ENCODE measurements at regions of chr17 and their contacts with region 1.

Region 1: GRCh38 chr17:64063766-64064224 is 43.4 kb upstream of the ICAM2 start:
- DNase-seq: peak; percentile 70 to 84 (median 82)
- H3K4me3 ChIP-seq: peak overlapping the region in 2 of 7 experiments; percentile 15 to 43
- H3K27ac ChIP-seq: no peak overlapping the region
- H3K4me1 ChIP-seq: peaks cover 0 to 24% (median 12%) of the 10 kb centered on the region in 4 experiments
- H3K27me3 ChIP-seq: no peaks in the 10 kb centered on the region

Region 2: DNA sequence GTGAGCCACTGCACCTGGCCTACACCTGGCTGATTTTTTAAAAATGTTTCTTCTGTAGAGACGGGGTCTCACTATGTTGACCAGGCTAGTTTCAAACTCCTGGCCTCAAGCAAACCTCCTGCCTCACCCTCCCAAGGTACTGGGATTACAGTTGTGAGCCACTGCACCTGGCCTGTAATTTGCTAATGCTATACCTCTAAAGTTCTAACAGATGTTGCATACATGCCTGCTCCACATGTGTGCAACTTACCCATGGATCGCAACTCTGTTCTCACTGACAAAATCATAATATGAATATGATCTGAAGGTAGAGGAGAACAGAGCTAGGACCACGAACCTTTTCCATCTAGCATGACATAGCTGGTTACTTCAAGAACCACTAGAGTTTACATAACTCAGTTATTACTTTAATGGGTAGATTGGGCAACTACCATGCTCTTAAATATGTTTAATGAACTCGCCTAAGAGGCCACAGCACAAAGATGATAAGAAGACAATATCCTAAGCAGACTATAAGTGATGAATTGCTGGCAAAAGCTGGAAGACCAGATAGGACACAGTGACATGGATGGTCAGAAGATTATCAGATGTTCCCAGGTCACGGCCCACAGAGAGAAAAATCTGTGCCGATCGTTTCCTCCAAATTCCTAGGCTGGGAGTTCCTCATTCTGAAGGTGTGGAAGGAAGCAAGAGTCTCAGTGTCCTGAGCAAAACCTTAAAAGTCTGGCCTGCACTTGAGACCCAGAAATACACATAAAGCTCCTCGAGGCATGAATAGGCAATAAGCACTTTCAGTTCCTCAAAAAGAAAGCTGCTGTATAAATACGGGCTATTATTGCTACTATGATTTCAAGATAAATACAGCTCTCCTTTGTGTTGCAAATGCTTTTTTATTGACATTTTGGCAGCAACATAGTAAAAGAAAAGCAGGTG is 10.2 kb after region 1 on chr17:
- CTCF ChIA-PET with region 1: interaction called, 42 read pairs
- POLR2A ChIA-PET with region 1: no interaction called
- DNase-seq: peak; percentile 34 to 88 (median 79)
- H3K4me3 ChIP-seq: peak overlapping the region in 4 of 7 experiments; percentile 20 to 57 (median 47)
- H3K27ac ChIP-seq: peak overlapping the region; percentile 33 to 60
- H3K4me1 ChIP-seq: peaks cover 23 to 36% (median 33%) of the 10 kb centered on the region in 4 experiments
- H3K27me3 ChIP-seq: no peaks in the 10 kb centered on the region

Region 3: DNA sequence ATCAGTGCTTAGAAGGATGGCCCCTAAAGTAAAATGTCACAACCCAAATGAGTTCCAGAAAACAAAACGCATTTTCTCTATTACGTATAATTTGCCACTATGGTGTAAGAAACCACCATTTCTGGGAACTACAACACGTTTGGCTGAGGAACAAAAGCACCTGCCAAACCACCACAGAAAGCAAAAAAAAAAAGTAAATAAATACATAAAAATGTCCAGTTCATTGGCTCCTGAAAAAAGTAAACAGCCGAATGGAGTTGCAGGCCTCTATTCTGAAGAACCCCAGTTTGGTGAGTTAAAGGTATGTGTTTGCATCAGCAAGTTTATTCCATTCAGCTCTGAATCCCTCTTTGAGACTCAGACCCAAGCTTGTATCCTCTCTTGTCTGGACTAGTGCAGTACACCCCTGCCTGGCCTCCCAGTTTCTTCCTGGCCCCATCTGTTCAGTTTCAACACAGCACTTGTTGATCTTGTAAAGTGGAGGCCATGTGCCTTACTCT is 29.2 kb after region 1 on chr17:
- CTCF ChIA-PET with region 1: interaction called, 12 read pairs
- POLR2A ChIA-PET with region 1: no interaction called
- DNase-seq: no peak
- H3K4me3 ChIP-seq: no peak overlapping the region
- H3K27ac ChIP-seq: no peak overlapping the region
- H3K4me1 ChIP-seq: peaks cover under 1 to 8% (median 6%) of the 10 kb centered on the region in 4 experiments
- H3K27me3 ChIP-seq: no peaks in the 10 kb centered on the region

Region 4: DNA sequence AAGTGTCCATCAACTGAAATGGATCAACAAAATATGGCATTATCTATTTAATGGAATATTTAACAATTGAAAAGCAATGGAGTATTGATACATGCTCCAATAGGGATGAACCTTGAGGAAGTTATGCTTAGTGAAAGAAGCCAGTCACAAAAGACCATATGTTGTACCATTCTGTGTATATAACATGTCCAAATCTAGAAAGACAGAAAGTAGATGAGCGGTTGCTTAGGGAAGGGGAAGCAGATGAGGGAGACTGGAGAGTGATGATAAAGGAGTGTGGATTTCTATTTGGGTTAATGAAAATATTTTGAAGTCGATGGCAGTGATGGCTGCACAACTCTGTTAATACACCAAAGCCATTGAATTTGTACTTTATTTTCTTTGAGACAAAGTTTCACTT is 74.6 kb after region 1 on chr17:
- CTCF ChIA-PET with region 1: interaction called, 212 read pairs
- POLR2A ChIA-PET with region 1: interaction called, 3 read pairs
- DNase-seq: peak; percentile 34 to 89 (median 78)
- H3K4me3 ChIP-seq: no peak overlapping the region
- H3K27ac ChIP-seq: no peak overlapping the region
- H3K4me1 ChIP-seq: peaks cover 0 to 7% (median 0%) of the 10 kb centered on the region in 4 experiments
- H3K27me3 ChIP-seq: no peaks in the 10 kb centered on the region

Measured in common myeloid progenitor, CD34-positive (primary cell).